ENCODE measurements at regions of chr19 and their contacts with region 1.

Region 1: DNA sequence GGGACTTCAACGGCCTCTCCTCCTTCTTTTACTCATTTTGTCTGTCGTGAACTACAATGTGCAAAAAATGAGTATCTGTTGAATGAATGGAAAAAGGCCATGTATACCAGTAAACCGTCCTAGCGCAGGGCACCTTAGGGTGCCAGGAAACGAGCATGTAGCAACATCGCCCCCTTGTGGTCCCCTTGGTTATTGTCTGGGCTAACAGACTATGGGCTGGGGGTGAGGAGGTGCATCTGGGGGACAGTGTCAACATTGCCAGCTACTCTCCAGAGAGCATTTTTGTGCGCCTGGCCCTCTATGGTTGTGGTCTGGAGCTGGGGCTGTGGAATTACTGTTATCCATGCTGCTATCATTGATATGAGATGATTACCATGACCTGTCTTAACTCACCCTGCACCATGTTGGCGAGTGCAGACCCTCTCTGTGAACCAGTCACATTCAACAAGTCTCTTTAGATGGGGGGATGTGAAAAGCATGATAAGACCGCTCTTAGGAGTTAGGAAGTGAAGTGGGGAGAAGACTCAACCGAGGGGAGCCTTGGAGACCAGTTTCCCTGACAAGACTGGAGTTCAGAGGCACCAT is 22.8 kb upstream of the SIGLEC11 start:
- DNase-seq: no peak
- H3K4me3 ChIP-seq: no peak overlapping the region
- H3K27ac ChIP-seq: no peak overlapping the region
- H3K4me1 ChIP-seq: no peaks in the 10 kb centered on the region
- H3K27me3 ChIP-seq: no peaks in the 10 kb centered on the region
- CTCF ChIP-seq: peak; percentile 63 to 84 (median 70)
- EP300 ChIP-seq: no peak
- POLR2A ChIP-seq: no peak

Region 2: DNA sequence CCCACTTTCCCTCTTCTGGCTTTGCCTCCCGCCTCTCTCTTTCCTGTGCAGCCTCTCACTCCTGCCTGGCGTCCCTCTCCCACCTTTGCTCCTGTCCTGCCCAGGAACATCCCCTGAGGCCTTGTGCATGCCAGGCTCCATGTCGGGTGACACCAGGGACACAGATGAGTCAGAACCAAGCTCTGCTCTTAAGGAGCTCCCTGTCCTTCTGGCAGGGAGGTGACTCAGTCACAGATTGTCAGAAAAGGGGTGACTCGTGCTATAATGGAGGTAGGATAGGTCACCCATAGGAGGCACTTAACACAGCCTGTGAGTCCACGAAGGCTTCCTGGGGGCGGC is 190.3 kb before region 1 on chr19:
- intact Hi-C with region 1: no loop called
- DNase-seq: no peak
- H3K4me3 ChIP-seq: no peak overlapping the region
- H3K27ac ChIP-seq: no peak overlapping the region
- H3K4me1 ChIP-seq: peaks cover 0 to 17% (median 4%) of the 10 kb centered on the region in 4 donors
- H3K27me3 ChIP-seq: no peaks in the 10 kb centered on the region
- CTCF ChIP-seq: no peak
- EP300 ChIP-seq: no peak
- POLR2A ChIP-seq: no peak

Region 3: DNA sequence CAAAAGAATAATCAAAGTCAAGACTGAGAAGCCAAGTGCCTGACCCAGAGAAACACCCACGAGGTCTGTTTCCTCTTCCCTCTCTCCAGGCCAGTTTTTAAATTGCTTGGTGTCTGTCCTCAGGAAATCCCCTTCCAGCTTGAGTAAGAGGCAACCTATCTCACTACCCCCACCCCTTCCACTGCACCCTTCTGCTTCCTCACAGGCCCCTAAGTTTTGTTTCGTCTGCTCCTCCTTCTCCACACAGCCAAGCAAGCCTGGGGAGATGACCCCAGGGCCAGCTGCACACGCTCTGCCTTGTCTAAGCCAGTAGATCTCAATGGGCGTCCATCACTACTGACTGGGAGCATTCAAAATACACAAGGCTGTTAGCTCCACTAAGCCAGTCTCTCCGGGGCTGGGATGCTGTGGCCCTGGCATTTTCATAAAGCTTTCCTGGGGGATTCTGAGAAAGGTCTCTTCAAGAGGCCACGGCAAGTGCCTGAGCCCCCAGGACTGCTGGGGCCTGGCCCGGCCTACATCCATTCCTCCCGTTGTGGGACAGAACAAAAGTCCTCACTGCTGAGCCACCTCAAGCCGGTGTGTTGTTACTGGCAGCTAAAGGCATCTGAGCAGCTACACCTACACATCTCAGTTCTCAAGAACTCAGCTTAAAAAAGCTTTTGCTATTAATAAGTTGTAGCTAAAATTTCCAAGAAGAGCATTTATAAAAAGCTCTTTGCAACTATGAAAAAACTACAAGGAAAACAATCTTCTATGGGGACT is 72.2 kb before region 1 on chr19:
- intact Hi-C with region 1: no loop called
- DNase-seq: no peak
- H3K4me3 ChIP-seq: no peak overlapping the region
- H3K27ac ChIP-seq: peak overlapping the region in 1 of 4 donors; percentile 11
- H3K4me1 ChIP-seq: peaks cover 0 to 27% (median 24%) of the 10 kb centered on the region in 4 donors
- H3K27me3 ChIP-seq: no peaks in the 10 kb centered on the region
- CTCF ChIP-seq: no peak
- EP300 ChIP-seq: no peak
- POLR2A ChIP-seq: no peak

Region 4: DNA sequence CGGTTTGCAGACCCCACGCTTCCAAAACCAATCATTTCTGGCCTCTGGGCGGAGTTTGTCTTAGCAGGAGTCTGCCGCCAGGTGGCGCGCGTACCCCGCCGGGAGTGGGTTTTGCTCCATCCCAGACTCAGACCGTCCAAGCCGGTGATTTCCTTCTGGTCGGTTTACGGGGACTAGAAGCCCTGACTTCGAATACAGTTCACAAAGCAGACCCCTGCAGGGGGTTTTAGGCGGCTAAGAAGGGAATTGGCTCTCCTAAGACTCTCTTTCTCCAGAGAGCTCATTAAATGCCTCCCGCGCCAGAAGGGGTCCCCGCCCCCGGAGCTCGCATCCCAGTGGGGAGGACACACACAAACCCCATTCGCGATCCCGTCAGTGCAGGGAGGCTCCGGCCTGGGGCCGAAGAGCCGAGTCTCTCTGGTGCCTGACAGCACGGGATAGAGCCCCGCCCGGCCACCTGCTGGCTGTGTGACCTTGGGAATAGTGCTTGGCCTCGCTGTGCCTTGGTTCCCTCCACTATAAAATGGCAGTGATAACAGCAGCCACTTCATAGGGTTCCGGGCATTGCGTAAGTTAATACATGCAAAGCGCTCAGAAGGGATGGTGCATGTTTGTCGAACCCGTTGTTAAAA is 45.9 kb before region 1 on chr19:
- intact Hi-C with region 1: loop called (anchors 2 kb)
- DNase-seq: peak; percentile 95
- H3K4me3 ChIP-seq: peak overlapping the region; percentile 27 to 34 (median 30)
- H3K27ac ChIP-seq: no peak overlapping the region
- H3K4me1 ChIP-seq: peaks cover 6 to 9% (median 9%) of the 10 kb centered on the region in 4 donors
- H3K27me3 ChIP-seq: peaks cover 0 to 8% (median 0%) of the 10 kb centered on the region in 4 donors
- CTCF ChIP-seq: peak; percentile 93 to 98 (median 96)
- EP300 ChIP-seq: no peak
- POLR2A ChIP-seq: no peak